GM10248 (cell line): ENCODE measurements at regions of chr20 and their contacts with region 1.

Region 1: DNA sequence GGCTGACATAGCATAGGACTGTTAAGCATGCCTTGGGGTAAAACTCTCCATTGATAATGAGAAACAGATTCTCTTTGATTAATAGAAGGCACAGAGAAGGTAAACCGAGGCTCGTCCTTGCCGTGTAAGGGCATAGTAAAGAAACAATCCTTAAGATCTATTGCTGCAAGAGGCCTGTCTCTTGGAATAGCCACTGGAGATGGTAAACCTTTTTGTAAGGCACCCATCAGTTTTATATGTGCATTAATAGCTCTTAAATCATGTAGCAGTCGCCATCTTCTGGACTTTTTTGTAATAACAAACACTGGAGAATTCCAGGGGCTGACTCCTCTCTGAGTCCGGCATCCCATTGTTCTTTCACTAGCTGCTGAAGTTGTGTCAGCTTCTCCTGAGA is 8.4 kb upstream of the ABHD12 start:
- DNase-seq: peak; percentile 40
- CTCF ChIP-seq: peak; percentile 60

Region 2: DNA sequence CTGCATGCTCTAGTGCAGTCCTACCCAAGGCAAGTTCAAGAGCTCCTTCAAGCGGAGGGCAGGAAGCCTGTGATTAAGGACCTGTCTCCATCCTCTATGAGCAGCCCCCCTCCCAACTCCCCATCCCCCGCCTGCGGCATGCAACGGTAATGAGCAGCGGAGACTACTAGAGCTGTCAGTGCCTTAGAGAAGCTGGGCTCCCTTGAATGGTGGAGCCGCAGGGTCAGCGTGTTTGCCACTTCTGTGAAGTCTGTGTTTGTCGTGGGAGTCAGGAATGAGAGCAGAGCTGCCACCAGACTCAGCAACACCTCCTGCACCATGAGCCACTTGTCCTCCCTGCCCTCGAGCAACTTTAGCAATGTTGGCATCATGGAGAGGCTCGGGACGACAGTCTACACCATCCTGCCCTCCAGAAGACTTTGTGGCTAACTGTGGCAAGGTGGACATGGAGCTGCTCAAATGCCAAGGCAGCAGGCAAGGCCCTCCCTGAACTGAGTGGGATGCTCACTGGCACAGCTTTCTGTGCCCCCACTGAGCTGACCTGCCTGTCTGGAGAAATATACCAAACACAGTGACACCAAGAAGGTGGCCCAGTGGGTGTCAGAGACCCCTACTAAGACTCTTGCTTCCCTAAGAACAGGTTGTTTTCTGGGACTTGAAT is 953.4 kb before region 1 on chr20:
- CTCF ChIA-PET with region 1: no interaction called
- POLR2A ChIA-PET with region 1: no interaction called
- DNase-seq: no peak
- CTCF ChIP-seq: no peak

Region 3: DNA sequence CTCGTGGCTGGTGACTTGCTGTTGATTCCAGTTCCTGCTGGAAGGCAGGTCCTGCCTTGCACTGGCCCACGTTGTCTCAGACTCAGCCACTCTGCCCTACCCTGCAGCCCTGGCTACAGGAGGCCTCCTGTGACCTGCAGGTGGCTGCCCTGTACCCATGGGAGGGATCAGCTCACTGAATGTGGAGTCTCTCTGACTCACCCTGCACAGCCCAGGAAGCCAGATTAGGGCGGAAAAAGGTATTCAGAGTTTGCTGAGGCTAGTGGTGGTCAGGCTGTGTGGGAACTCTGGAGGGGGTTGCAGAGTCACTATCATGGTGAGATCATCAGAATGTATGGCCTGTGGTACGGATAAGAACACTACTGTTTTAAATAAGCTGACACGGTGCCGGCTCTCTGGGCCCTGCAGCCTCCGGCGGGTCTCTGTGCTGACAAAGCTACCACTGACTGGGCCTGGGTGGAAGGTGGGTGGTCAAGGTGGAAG is 175.8 kb before region 1 on chr20:
- CTCF ChIA-PET with region 1: interaction called, 11 read pairs
- POLR2A ChIA-PET with region 1: no interaction called
- DNase-seq: no peak
- CTCF ChIP-seq: no peak

Region 4: DNA sequence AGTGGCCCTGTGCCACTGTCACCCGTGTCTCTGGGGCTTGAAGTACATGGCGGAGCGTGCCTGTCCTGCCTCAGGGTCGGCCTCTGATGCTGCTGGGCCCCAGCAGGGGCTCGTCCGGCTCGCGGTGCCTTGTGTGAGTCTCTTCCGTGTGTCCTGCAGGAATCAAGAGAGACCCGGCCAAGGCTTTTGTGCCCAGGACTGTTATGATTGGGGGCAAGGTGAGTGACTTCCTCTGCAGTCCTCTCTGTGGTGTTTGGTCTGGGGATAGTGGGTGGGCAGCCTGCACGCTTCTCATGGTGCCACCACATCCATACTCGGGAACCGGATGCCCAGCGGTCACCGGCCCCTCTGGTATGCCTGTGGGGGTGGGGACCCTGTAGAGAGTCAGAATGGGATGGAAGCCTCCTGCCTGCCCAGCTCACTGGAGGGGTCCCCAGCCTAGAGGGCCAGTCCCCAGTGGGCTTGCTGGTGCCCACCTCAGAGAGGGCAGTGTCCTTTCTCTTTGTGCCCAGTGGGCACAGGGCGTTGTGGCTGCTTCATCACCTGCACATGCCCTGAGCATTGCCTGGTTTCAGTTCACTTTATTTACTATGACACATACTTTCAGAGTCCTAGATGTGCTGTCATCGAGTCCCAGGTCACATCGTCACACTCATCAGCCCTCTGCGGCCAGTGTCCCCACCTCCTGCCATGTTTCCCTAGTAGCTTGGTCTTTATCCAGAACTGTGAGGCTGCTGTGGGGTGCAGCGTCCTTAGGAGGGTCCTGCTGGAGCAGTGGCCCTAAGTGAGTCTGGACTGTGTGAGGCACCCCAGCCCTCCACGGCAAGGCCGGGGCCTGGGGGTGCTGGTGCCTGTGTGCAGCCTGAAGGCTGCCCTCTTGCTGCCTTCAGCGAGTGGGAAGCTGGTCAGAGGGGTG is 110.5 kb before region 1 on chr20:
- CTCF ChIA-PET with region 1: interaction called, 37 read pairs
- POLR2A ChIA-PET with region 1: no interaction called
- DNase-seq: peak; percentile 81
- CTCF ChIP-seq: no peak

Region 5: DNA sequence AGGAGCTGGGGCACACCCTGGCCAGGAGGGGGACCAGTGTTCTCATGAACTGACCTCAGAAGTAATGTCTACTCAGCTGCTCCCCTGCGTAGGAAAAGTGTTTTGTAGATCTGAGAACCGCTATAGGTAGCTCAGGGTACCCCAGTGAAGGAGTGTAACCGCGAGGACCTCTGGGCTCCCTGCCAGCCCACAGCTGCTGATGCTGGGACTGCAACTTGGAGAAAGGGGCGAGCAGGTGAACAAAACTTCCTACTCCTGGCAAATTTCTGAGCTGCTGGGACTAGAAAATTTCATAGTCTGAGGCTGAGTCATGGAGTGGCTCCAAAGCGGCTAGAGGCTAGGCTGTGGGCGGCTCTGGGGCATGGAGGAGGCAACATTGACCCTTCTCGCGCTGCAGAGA is 99.2 kb before region 1 on chr20:
- CTCF ChIA-PET with region 1: interaction called, 37 read pairs
- POLR2A ChIA-PET with region 1: no interaction called
- DNase-seq: no peak
- CTCF ChIP-seq: peak; percentile 19

Region 6: DNA sequence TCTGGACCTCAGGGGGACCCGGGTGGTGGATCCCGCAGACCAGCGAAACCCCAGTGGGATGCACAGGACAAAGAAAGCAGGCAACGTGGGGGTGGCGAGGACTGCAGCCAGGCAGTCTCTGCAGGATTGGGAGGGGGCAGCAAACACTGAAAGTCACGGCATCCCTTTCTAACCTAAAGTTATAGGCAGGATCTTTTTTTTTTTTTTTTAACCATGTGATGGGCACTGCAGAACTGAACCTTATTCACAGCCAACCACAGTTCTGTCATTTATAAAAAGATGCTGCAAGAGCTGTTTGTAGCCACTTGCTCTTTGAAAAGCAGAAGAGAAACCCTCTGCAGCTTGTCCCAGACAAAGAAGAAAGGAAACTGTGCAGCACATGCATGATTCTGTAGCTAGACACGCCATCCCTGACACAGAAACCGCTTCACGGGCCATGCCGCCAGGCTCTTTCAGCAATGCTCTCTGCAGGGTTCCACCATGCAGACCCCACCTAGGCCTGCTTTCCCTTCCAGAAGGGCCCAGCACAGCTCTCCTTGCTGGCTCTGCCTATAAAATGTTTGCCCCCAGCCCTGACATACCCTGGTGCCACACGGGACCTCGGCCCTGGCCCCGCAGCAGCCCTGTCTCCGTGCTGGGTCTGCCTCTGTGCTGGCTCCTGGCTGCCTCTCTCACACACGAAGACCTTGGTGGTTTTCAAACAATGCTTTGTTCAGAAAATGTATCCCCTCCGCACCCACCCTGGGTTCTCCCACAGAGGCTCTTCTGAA is 80.4 kb before region 1 on chr20:
- CTCF ChIA-PET with region 1: interaction called, 18 read pairs
- POLR2A ChIA-PET with region 1: no interaction called
- DNase-seq: peak; percentile 88
- CTCF ChIP-seq: no peak

Region 7: DNA sequence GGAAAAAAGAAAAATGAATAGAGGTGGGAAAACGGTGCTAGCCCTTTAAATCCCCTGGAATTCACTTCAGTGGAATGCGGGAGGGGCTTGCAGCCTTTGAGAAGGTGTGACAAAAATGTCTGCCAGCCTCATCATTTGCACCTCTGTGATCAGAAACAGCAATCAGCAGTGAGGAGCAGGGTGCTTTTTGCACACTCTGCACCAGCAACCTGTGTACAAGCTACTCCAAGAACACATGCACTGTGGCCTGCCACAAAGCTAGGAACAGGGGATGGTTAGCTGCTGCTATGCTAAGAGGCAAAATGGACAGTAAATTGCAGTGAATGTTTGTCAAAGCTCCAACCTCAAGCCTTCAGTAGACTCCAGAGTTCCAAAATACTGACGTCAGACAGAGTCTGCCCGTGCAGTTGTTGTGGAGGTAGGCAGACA is 38.1 kb after region 1 on chr20:
- CTCF ChIA-PET with region 1: no interaction called
- POLR2A ChIA-PET with region 1: no interaction called
- DNase-seq: no peak
- CTCF ChIP-seq: no peak